Endothelial cell of umbilical vein (primary cell): ENCODE measurements at regions of chr14 and their contacts with region 1.

Region 1: DNA sequence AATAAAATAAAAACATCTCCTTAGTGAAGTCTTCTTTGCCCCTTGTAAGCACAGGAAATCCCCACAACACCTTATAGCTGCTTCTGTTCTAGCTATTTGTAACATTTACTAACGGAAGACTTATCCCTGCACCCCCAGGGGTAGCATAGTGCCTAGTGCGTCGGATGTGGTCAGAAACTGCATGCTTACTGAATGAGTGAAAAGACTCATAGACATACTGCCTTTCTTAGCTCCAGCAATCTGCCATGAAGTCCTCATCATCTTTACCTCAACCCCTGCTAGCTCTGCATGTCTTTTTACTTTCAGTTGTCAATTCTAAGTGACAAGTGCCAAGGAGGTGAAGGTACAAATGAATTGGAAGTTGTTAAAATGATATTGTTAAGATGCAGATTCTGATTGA is 12.9 kb downstream of the RIOX1 start:
- DNase-seq: no peak
- H3K4me3 ChIP-seq: no peak overlapping the region
- H3K27ac ChIP-seq: no peak overlapping the region
- H3K4me1 ChIP-seq: no peaks in the 10 kb centered on the region
- H3K27me3 ChIP-seq: no peaks in the 10 kb centered on the region
- CTCF ChIP-seq: no peak
- POLR2A ChIP-seq: no peak

Region 2: DNA sequence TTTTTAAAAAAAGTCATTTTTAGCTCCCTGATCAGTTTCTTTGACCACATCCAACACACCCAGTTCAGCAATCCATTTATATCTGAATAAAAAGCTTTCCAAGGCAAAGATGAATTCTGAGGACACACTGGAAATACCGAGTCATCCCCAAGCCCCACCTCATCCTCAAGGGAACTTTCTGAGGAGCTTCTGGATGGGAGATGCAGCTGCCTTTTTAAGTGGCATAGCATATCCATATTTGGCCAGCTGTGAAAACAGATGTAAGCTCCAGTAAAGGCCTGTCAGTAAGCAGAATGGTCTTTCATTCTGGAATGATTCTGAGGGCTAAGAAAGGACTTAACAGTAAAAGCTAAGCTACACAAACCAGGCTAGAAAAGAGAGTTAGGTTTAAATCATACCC is 495.1 kb before region 1 on chr14:
- CTCF ChIA-PET with region 1: no interaction called
- POLR2A ChIA-PET with region 1: no interaction called
- dilution Hi-C with region 1: no loop called
- intact Hi-C with region 1: no loop called
- DNase-seq: no peak
- H3K4me3 ChIP-seq: no peak overlapping the region
- H3K27ac ChIP-seq: no peak overlapping the region
- H3K4me1 ChIP-seq: no peaks in the 10 kb centered on the region
- H3K27me3 ChIP-seq: no peaks in the 10 kb centered on the region
- CTCF ChIP-seq: no peak
- POLR2A ChIP-seq: no peak

Region 3: GRCh38 chr14:73521229-73521628 is 17.6 kb after region 1 on chr14:
- CTCF ChIA-PET with region 1: interaction called, 37 read pairs
- POLR2A ChIA-PET with region 1: no interaction called
- dilution Hi-C with region 1: no loop called
- intact Hi-C with region 1: no loop called
- DNase-seq: no peak
- H3K4me3 ChIP-seq: no peak overlapping the region
- H3K27ac ChIP-seq: no peak overlapping the region
- H3K4me1 ChIP-seq: no peaks in the 10 kb centered on the region
- H3K27me3 ChIP-seq: peaks cover 0 to 2% of the 10 kb centered on the region in 2 experiments
- CTCF ChIP-seq: no peak
- POLR2A ChIP-seq: no peak

Region 4: GRCh38 chr14:73568381-73568781 is 64.7 kb after region 1 on chr14:
- CTCF ChIA-PET with region 1: interaction called, 58 read pairs
- POLR2A ChIA-PET with region 1: interaction called, 3 read pairs
- dilution Hi-C with region 1: no loop called
- intact Hi-C with region 1: no loop called
- DNase-seq: peak; percentile 4
- H3K4me3 ChIP-seq: peak overlapping the region in 1 of 3 experiments; percentile 54
- H3K27ac ChIP-seq: peak overlapping the region; percentile 95
- H3K4me1 ChIP-seq: peaks cover 19% of the 10 kb centered on the region
- H3K27me3 ChIP-seq: no peaks in the 10 kb centered on the region
- CTCF ChIP-seq: no peak
- POLR2A ChIP-seq: no peak

Region 5: DNA sequence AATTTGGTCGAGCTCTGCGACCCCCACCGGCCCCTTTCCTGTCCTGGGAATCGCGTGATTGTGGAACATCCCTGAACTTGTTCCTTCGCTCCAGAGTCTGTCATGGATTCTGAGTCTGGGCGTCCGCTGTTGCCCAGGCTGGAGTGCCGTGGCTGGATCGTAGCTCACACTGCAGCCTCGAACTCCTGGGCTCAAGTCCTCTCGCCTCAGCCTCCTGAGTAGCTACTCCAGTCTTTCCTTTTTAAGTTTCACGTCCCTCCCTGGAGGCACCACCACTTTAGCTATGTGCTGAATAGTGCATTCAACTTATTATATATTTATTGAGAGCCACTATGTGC is 109.4 kb after region 1 on chr14:
- CTCF ChIA-PET with region 1: interaction called, 10 read pairs
- POLR2A ChIA-PET with region 1: no interaction called
- dilution Hi-C with region 1: no loop called
- intact Hi-C with region 1: no loop called
- DNase-seq: no peak
- H3K4me3 ChIP-seq: peak overlapping the region; percentile 52 to 62 (median 58)
- H3K27ac ChIP-seq: no peak overlapping the region
- H3K4me1 ChIP-seq: peaks cover 5% of the 10 kb centered on the region
- H3K27me3 ChIP-seq: no peaks in the 10 kb centered on the region
- CTCF ChIP-seq: no peak
- POLR2A ChIP-seq: no peak

Region 6: GRCh38 chr14:73825551-73826188 is 322.0 kb after region 1 on chr14:
- CTCF ChIA-PET with region 1: no interaction called
- POLR2A ChIA-PET with region 1: no interaction called
- dilution Hi-C with region 1: no loop called
- intact Hi-C with region 1: loop called (anchors 1 kb)
- DNase-seq: peak; percentile 71
- H3K4me3 ChIP-seq: no peak overlapping the region
- H3K27ac ChIP-seq: no peak overlapping the region
- H3K4me1 ChIP-seq: peaks cover 7% of the 10 kb centered on the region
- H3K27me3 ChIP-seq: no peaks in the 10 kb centered on the region
- CTCF ChIP-seq: peak; percentile 89
- POLR2A ChIP-seq: no peak

Region 7: GRCh38 chr14:73862480-73862879 is 358.8 kb after region 1 on chr14:
- CTCF ChIA-PET with region 1: interaction called, 8 read pairs
- POLR2A ChIA-PET with region 1: no interaction called
- dilution Hi-C with region 1: no loop called
- intact Hi-C with region 1: loop called (anchors 10 kb)
- DNase-seq: no peak
- H3K4me3 ChIP-seq: no peak overlapping the region
- H3K27ac ChIP-seq: no peak overlapping the region
- H3K4me1 ChIP-seq: no peaks in the 10 kb centered on the region
- H3K27me3 ChIP-seq: no peaks in the 10 kb centered on the region
- CTCF ChIP-seq: no peak
- POLR2A ChIP-seq: no peak

Region 8: DNA sequence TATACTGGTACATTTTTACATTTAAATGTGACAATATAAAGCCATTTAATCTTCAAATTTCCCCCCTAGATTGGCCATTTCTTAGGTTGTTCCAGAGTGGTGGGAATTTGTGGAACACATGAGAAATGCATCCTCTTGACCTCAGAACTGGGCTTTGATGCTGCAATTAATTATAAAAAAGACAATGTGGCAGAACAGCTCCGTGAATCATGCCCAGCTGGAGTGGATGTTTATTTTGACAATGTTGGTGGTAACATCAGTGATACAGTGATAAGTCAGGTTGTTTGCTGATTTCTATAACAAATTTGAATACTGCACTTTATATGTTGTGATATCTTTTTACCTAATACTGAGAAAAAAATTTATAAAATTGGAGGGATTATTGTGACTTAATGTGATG is 375.4 kb after region 1 on chr14:
- CTCF ChIA-PET with region 1: no interaction called
- POLR2A ChIA-PET with region 1: no interaction called
- dilution Hi-C with region 1: no loop called
- intact Hi-C with region 1: no loop called
- DNase-seq: no peak
- H3K4me3 ChIP-seq: no peak overlapping the region
- H3K27ac ChIP-seq: no peak overlapping the region
- H3K4me1 ChIP-seq: no peaks in the 10 kb centered on the region
- H3K27me3 ChIP-seq: no peaks in the 10 kb centered on the region
- CTCF ChIP-seq: no peak
- POLR2A ChIP-seq: no peak

Region 9: DNA sequence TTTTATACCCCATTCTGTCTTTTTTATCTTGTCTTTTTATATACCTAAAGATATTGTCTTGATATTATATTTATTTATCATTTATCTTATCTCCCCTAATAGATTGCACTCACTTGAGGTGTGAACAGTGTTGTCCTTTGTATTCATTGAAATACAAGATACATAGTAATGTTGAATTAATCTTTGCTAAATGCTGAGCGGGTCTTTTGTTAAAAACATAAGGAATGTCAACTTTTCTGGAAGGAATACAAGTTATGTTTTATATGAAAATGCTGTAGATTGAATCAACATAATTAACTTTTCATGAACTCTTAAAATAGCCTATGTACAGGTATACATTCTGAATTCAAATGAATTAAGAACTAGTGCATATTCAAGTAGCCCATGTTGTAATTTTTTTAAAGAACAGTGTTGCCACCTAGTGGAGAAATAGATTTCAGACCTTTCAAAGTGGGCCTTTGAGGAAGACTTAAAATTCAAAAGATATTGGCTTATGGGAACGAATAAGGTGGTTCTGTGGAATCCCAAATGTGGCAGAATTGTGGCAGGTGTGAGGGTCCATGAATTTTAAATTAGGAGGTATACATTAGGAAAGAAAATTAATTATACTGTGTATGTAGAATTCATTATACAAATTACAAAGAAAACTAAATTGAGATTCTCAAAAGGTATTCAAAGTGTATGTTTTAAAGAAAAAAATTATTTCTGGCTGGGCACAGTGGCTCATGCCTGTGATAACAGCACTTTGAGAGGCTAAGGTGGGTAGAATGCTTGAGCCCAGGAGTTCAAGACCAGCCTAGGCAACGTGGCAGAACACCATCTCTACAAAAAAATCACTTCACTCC is 534.6 kb after region 1 on chr14:
- CTCF ChIA-PET with region 1: no interaction called
- POLR2A ChIA-PET with region 1: no interaction called
- dilution Hi-C with region 1: no loop called
- intact Hi-C with region 1: loop called (anchors 2 kb)
- DNase-seq: peak; percentile 76
- H3K4me3 ChIP-seq: no peak overlapping the region
- H3K27ac ChIP-seq: no peak overlapping the region
- H3K4me1 ChIP-seq: no peaks in the 10 kb centered on the region
- H3K27me3 ChIP-seq: no peaks in the 10 kb centered on the region
- CTCF ChIP-seq: peak; percentile 39 to 42
- POLR2A ChIP-seq: no peak